Heart right ventricle (tissue), 16 donors: ENCODE measurements at regions of chr1 and their contacts with region 1.

Region 1: DNA sequence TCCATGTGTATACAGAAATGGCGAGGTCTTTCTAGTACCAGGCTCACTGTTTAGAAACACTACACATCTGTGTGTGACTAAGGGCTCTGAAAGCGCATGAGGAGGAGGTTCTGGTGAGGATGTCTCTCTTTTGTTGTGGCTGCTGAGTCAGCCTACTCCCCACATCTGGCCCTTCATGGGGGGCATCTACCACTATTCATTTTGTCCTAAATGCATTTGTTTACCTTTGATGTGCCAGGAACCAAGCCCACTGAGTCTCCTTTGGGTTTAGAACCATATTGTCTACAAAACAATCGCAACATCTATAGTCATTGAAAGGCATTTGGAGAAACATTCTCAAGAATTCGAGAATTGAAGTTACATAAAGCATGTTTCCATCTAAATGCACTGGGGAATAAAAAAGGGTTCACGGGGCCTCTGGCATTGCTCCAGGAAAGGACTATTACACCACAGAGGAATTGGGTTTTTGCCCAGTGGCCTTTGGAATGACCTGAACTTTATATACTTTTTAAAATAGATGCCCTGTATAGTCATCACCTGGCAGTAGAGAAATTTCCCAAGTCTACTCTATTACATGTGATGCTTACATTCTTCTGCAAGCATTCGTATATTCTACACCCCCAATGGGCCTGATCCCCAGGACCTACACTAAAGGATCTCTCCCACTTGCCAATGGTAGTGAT is 35.1 kb upstream of the ADORA3 start:
- DNase-seq: no peak
- ATAC-seq: no peak
- H3K4me3 ChIP-seq: no peak overlapping the region
- H3K27ac ChIP-seq: no peak overlapping the region
- H3K4me1 ChIP-seq: peaks cover 0 to 17% (median 5%) of the 10 kb centered on the region in 9 donors
- H3K27me3 ChIP-seq: no peaks in the 10 kb centered on the region
- CTCF ChIP-seq: no peak

Region 2: DNA sequence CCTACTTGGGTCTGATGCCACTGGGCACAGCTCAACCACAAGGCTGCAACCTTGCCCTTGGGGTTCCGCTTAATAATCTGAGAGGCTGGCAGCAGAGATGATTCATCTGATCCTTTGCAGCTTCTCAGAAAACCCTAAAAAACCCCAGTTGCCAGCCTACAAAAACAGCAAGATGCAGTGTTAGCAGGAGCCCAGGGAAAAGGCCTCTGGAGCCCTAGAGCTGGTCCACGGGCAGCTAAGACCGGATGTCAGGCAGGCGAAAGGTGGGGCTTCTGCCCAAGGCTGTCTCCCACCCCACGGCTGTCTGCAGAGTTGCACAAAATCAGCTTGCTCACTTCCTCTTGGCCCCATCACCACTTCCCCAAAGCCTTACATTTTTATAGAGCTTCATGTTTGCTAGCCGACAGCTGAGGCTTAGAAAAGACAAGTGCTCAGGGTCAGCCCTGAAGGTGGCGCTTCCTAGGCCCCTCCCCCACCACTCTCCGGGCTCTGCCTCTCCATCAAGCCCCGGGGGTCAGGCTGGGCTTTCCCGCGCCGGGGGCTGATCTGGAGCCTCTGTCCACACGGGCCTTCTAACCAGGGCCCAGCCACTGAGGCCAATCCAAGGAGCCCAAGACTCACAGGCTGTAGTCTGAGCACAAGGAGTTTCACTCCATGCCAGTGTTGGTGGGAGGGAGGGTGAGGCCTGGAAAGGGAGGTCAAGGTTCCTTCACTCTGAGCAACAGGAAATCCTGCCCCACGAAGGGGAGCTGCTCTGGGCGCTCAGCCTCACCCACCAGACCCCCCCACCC is 30.9 kb before region 1 on chr1:
- intact Hi-C with region 1: no loop called
- DNase-seq: peak; percentile 73 to 79
- ATAC-seq: peak; percentile 59 to 85 (median 75)
- H3K4me3 ChIP-seq: peak overlapping the region in 9 of 10 donors; percentile 6 to 52 (median 31)
- H3K27ac ChIP-seq: peak overlapping the region; percentile 61 to 99 (median 90)
- H3K4me1 ChIP-seq: peaks cover 20 to 95% (median 48%) of the 10 kb centered on the region in 9 donors
- H3K27me3 ChIP-seq: no peaks in the 10 kb centered on the region
- CTCF ChIP-seq: no peak

Region 3: GRCh38 chr1:111570781-111571181 is 32.3 kb after region 1 on chr1:
- intact Hi-C with region 1: loop called in 2 of 10 experiments (anchors 5 kb)
- DNase-seq: no peak
- ATAC-seq: peak in 1 of 8 donors; percentile 25
- H3K4me3 ChIP-seq: no peak overlapping the region
- H3K27ac ChIP-seq: no peak overlapping the region
- H3K4me1 ChIP-seq: peaks cover 0 to 15% (median 5%) of the 10 kb centered on the region in 9 donors
- H3K27me3 ChIP-seq: no peaks in the 10 kb centered on the region
- CTCF ChIP-seq: peak in 6 of 9 donors; percentile 10 to 38 (median 28)

Region 4: DNA sequence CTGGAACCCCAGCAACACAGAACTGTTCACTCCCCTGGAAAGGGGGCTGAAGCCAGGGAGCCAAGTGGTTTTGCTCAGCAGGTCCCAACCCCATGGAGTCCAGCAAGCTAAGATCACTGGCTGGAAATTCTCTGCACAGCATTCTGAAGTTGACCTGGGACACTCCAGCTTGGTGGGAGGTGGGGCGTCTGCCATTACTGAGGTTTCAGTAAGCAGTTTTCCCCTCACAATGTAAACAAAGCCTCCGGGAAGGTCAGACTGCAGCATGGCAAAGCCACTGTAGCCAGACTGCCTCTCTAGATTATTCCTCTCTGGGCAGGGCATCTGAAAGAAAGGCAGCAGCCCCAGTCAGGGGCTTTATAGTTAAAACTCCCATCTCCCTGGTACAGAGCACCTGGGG is 141.1 kb after region 1 on chr1:
- intact Hi-C with region 1: no loop called
- DNase-seq: no peak
- ATAC-seq: no peak
- H3K4me3 ChIP-seq: no peak overlapping the region
- H3K27ac ChIP-seq: no peak overlapping the region
- H3K4me1 ChIP-seq: peaks cover 0 to 9% (median under 1%) of the 10 kb centered on the region in 9 donors
- H3K27me3 ChIP-seq: no peaks in the 10 kb centered on the region
- CTCF ChIP-seq: no peak